CD8-positive, alpha-beta memory T cell (primary cell): ENCODE measurements at regions of chr15 and their contacts with region 1.

Region 1: GRCh38 chr15:65286704-65287519 is at the start of gene PARP16:
- DNase-seq: peak; percentile 90 to 95 (median 92)
- H3K4me3 ChIP-seq: peak within 1 kb of the TSS; percentile 80
- H3K4me3 Mint-ChIP-seq: peak within 1 kb of the TSS; percentile 67 to 94 (median 88)
- H3K27ac ChIP-seq: peak within 1 kb of the TSS; percentile 78
- H3K27ac Mint-ChIP-seq: peak within 1 kb of the TSS; percentile 7 to 96 (median 95)
- H3K4me1 ChIP-seq: peaks cover 23% of the 10 kb centered on the region
- H3K4me1 Mint-ChIP-seq: peaks cover 30 to 49% (median 48%) of the 10 kb centered on the region in 3 donors
- H3K27me3 ChIP-seq: no peaks in the 10 kb centered on the region
- H3K27me3 Mint-ChIP-seq: peaks cover 0 to 2% of the 10 kb centered on the region in 2 donors
- total RNA-seq, gene PARP16: 14.1 to 14.7 TPM

Region 2: GRCh38 chr15:65184868-65185738 is 101.8 kb before region 1 on chr15 and contains the start of gene CLPX:
- CTCF ChIA-PET with region 1: interaction called, 12 read pairs
- POLR2A ChIA-PET with region 1: interaction called, 28 read pairs
- DNase-seq: peak; percentile 86 to 95 (median 93)
- H3K4me3 ChIP-seq: peak within 1 kb of the TSS; percentile 76
- H3K4me3 Mint-ChIP-seq: peak within 1 kb of the TSS; percentile 93 to 96 (median 96)
- H3K27ac ChIP-seq: peak within 1 kb of the TSS; percentile 83
- H3K27ac Mint-ChIP-seq: peak within 1 kb of the TSS; percentile 94 to 98 (median 96)
- H3K4me1 ChIP-seq: peaks cover 20% of the 10 kb centered on the region
- H3K4me1 Mint-ChIP-seq: peaks cover 23 to 41% (median 39%) of the 10 kb centered on the region in 3 donors
- H3K27me3 ChIP-seq: no peaks in the 10 kb centered on the region
- H3K27me3 Mint-ChIP-seq: no peaks in the 10 kb centered on the region
- total RNA-seq, gene CLPX: 60.5 to 65.6 TPM

Region 3: DNA sequence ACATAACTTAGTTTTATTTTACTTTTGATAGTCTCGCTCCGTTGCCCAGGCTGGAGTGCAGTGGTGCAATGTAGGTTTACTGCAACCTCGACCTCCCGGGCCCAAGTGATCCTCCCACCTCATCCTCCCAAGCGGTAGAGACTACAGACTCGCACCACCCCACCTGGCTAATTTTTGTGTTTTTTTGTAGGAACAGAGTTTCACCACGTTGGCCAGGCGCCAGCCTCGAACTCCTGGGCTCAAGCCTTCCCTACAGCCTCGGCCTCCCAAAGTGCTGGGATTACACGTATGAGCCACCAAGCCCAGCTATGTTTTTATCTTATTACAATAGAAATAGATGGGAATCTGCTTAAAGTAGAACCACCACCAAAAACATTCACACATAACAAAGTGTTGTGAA is 11.8 kb after region 1 on chr15:
- CTCF ChIA-PET with region 1: interaction called, 16 read pairs
- POLR2A ChIA-PET with region 1: interaction called, 24 read pairs
- DNase-seq: no peak
- H3K4me3 ChIP-seq: peak overlapping the region; percentile 26
- H3K4me3 Mint-ChIP-seq: peak overlapping the region in 6 of 7 donors; percentile 69 to 95 (median 92)
- H3K27ac ChIP-seq: no peak overlapping the region
- H3K27ac Mint-ChIP-seq: peak overlapping the region in 5 of 8 donors; percentile 12 to 93 (median 70)
- H3K4me1 ChIP-seq: peaks cover 38% of the 10 kb centered on the region
- H3K4me1 Mint-ChIP-seq: peaks cover 29 to 44% (median 37%) of the 10 kb centered on the region in 3 donors
- H3K27me3 ChIP-seq: no peaks in the 10 kb centered on the region
- H3K27me3 Mint-ChIP-seq: peaks cover 0 to 2% of the 10 kb centered on the region in 2 donors